CD4-positive, alpha-beta memory T cell (primary cell): ENCODE measurements at regions of chr6 and their contacts with region 1.

Region 1: GRCh38 chr6:170087941-170088581 is 202.8 kb downstream of the DLL1 start:
- DNase-seq: peak; percentile 46 to 71 (median 48)
- H3K4me3 ChIP-seq: peak overlapping the region; percentile 57 to 61
- H3K4me3 Mint-ChIP-seq: peak overlapping the region; percentile 83 to 96 (median 91)
- H3K27ac ChIP-seq: peak overlapping the region; percentile 40
- H3K27ac Mint-ChIP-seq: peak overlapping the region; percentile 78 to 98 (median 92)
- H3K4me1 ChIP-seq: peaks cover 25% of the 10 kb centered on the region
- H3K4me1 Mint-ChIP-seq: peaks cover 21 to 47% (median 32%) of the 10 kb centered on the region in 4 donors
- H3K27me3 ChIP-seq: no peaks in the 10 kb centered on the region
- H3K27me3 Mint-ChIP-seq: no peaks in the 10 kb centered on the region

Region 2: DNA sequence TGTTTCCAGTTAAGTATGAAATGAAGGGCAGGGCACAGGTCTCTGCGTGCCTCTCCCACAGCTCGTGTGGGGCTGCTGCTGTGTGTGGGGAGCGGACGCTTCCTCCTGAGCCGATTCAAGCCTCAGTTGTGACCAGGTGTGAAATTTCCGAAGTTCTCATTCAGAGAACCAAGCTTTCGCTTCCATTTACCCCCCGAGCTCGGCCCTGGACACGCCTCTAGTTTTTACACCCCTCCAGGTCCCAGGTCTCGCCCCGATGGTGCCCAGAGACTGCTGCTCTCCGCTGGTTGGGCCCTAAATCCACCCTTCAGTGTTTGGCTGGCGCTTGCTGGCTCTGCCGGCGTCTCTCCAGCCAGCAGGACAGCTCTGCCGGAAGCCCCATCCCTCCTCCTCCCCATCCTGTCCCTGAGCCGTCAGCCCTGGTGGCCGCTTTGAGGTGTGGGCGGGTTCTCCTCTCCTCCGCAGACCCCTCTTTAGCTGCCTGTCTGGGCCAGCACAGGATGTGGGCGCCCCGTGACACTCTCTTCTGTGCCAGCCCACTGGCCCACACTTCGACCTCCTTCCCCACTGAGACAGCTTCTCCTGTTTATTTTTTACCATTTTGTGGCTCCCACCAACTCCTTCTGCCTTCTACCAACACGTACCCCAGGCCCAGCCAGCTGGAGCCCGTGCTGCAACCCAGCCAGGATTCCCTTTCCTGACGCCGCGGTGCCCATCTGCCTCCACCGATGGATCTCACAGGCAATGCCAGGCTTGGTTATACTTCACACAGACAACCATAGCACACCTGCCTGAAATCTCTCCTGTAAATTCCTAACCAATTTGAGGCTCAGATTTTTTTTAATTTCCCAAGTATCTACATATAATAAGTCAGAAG is 60.0 kb after region 1 on chr6:
- CTCF ChIA-PET with region 1: interaction called, 17 read pairs
- POLR2A ChIA-PET with region 1: interaction called, 42 read pairs
- intact Hi-C with region 1: no loop called
- DNase-seq: peak; percentile 31 to 62 (median 47)
- H3K4me3 ChIP-seq: peak overlapping the region in 1 of 2 donors; percentile 17
- H3K4me3 Mint-ChIP-seq: peak overlapping the region; percentile 70 to 89 (median 82)
- H3K27ac ChIP-seq: no peak overlapping the region
- H3K27ac Mint-ChIP-seq: peak overlapping the region; percentile 70 to 92 (median 87)
- H3K4me1 ChIP-seq: peaks cover 29% of the 10 kb centered on the region
- H3K4me1 Mint-ChIP-seq: peaks cover 23 to 59% (median 34%) of the 10 kb centered on the region in 4 donors
- H3K27me3 ChIP-seq: peaks cover 3% of the 10 kb centered on the region
- H3K27me3 Mint-ChIP-seq: peaks cover 5 to 7% of the 10 kb centered on the region in 2 donors